Activated CD4-positive, alpha-beta T cell treated with anti-CD3 and anti-CD28 coated beads, Interleukin-2, amount 10 ng/mL, durations not matched to agents 24 days and 14 days (primary cell): ENCODE measurements at regions of chr16 and their contacts with region 1.

Region 1: DNA sequence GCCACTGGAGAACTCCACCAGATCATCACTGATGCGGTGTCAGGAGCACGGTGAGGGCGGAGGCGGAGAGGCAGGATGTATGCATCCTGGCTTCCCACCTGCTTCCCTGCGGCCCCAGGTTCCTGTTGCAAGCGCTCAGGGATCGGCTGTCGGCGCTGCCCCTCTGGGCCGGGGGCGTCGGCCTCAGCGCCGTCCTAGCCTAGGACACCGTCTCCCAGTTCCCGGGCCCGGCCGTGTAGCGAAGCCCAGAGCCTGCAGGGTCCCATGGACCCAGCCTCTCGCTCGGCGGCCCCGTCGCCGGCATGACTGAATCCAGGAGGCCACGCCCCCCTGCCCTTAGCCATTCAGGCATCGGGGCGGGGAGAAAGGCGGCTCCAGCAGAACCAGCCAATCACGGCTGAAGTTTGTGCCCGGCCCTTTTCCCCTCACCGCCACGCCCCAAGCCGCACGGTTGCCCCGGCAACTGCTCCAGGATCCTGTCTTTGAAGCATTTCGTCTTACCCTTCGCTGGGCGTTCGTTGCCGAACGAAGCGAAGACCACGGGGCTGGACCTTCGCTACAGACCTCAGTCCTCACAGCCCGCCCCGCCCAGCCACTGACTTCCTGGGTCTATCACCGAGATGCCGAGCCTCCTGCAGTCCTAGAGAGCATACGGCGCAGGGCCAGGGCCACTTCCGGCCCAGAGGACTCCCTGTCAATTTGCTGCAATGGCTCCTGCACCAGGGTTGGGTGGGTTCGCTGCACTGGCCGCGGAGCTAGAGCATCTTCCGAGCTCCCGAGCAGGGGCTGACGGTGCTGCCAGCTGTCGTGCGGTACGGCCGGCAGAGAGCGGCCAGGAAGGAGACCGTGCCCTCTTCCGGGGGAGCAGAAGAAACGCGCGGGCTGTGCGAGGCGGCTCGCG is 10.6 kb upstream of the ZNF213 start:
- DNase-seq: peak; percentile 99
- H3K4me3 Mint-ChIP-seq: peak overlapping the region; percentile 98
- H3K27ac Mint-ChIP-seq: peak overlapping the region; percentile 94
- H3K4me1 Mint-ChIP-seq: peaks cover 38% of the 10 kb centered on the region
- H3K27me3 Mint-ChIP-seq: no peaks in the 10 kb centered on the region

Region 2: GRCh38 chr16:3099732-3100499 is 24.3 kb before region 1 on chr16:
- intact Hi-C with region 1: loop called (anchors 1 kb)
- DNase-seq: peak; percentile 97
- H3K4me3 Mint-ChIP-seq: peak overlapping the region; percentile 85
- H3K27ac Mint-ChIP-seq: peak overlapping the region; percentile 86
- H3K4me1 Mint-ChIP-seq: peaks cover 38% of the 10 kb centered on the region
- H3K27me3 Mint-ChIP-seq: peaks cover 2% of the 10 kb centered on the region

Region 3: DNA sequence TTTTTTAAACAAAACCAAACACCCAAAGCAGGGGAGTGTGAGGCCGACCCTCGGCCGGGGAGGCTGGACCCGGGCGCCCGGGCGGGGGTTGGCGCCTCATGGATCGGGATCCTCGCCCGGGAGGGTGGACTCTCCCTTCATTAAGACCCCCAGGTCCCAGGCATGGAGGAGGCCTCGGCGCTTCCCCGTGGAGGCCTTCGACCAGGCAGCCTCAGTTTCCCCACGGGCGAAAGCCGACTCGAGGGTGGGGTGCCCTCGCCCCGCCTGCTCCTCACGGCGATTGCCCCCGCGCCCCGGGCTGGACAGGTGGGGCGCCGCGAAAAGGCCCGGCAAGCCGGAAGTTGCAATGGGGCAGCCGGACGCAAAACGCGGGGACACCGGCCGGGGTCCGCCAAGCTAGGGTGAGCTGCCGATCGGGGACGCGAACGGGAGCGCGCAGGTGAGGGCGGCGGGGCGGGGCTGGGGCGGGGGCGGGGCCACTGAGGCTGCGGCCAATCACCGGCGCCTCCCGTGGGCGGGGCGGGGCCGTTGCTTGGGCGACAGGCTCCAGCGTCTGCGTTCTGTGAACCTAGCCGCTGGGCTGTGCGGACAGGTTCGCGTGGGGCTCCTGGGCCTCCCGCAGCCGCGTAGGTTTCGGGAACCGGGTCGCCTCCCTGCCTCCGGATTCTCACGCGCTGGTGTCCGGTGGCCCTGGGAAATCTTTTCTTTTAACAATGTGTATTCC is 17.9 kb before region 1 on chr16:
- intact Hi-C with region 1: loop called (anchors 1 kb)
- DNase-seq: peak; percentile 97
- H3K4me3 Mint-ChIP-seq: peak overlapping the region; percentile 88
- H3K27ac Mint-ChIP-seq: peak overlapping the region; percentile 90
- H3K4me1 Mint-ChIP-seq: peaks cover 22% of the 10 kb centered on the region
- H3K27me3 Mint-ChIP-seq: peaks cover 2% of the 10 kb centered on the region

Region 4: DNA sequence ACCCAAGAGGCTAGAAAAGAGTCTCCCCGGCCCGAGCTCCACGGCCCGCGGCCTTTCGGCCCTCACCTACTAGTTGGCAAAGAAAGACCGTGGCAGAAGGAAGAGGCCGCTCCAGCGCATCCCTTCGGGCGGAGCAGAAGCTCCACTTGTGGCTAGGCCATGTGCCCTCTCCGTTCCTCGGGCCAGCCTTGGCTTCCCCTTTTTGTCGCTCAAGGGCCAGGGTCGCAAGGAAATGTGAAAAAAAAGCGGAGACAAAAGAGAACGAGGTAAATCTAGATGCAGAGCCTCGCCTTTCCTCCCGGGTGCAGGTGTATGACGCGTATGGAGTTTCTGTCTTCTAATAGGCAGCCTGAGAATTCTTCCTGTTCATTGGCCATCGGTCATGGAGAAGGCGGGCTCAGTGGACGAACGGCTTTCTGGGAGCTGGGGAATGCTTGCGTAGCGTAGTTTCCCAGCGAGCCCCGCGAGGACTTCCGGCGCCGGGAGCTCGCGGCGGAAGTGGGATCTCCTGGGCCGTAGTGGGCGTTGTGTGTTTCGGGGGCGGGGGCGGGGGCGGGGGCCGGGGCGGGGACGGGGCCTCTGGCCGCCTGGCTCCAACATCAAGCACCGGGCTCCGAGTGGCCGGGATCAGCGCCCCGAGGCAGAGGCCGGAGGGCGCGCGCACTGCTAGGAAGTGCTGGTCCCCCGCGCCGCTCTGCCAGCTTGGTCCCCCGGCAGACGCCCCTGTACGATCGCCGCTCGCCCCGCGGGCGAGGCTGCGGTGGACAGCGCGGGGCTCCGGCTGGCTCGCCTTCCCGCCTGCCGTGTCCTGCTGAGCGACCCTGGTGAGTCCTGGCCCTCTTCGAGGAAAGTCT is 10.6 kb after region 1 on chr16 and contains the start of gene ZNF213:
- intact Hi-C with region 1: loop called (anchors 1 kb)
- DNase-seq: peak; percentile 98
- H3K4me3 Mint-ChIP-seq: peak within 1 kb of the TSS; percentile 99
- H3K27ac Mint-ChIP-seq: peak within 1 kb of the TSS; percentile 97
- H3K4me1 Mint-ChIP-seq: peaks cover 26% of the 10 kb centered on the region
- H3K27me3 Mint-ChIP-seq: no peaks in the 10 kb centered on the region
- total RNA-seq, gene ZNF213: 9.5 and 10.6 TPM in 2 replicates